Posterior vena cava (tissue), 2 donors: ENCODE measurements at regions of chr1 and their contacts with region 1.

Region 1: DNA sequence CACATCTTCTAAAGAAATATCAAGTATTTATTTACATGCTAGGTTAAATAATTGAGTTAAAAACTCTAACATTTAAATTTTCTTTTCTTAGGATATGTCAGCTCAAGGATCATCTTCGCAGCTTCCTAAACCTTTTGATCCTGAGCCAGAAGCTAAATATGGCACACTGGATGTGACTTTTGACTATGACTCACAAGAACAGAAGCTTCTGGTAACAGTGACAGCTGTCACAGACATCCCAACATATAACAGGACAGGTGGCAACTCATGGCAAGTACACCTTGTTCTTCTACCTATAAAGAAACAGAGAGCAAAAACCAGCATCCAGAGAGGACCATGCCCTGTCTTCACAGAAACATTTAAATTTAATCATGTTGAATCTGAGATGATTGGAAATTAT is 132.7 kb upstream of the SERTAD4 start:
- DNase-seq: no peak

Region 2: GRCh38 chr1:210123924-210124589 is 24.1 kb after region 1 on chr1:
- intact Hi-C with region 1: loop called in 1 of 2 experiments (anchors 1 kb)
- DNase-seq: no peak